ENCODE measurements at regions of chr2 and their contacts with region 1.

Region 1: DNA sequence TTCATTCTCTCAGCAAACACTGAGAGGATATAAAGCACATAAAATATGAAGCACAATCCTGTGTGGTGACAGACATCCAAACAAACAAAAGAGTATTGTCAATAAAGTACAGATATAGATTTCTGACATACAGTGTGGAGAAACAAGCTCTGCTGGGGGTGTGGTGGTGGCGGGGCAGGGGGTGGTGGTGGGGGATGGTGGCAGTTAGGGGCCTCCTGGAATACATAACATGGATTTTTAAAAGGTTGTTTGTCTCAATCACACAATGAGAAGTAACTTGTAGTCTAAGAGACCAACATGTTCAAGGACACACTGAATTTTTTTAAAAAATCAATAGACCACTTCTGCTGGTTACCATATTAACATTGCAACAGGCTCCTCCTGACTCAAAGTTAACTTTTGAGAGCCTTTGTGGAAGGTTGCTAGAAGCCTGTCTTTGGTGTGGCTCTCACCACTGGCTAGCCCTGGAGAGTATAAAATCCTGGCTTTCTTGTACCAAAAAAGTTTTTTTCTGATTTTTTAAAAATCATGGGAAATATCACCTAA is 1197.4 kb downstream of the SUCLG1 start:
- DNase-seq: no peak

Region 2: DNA sequence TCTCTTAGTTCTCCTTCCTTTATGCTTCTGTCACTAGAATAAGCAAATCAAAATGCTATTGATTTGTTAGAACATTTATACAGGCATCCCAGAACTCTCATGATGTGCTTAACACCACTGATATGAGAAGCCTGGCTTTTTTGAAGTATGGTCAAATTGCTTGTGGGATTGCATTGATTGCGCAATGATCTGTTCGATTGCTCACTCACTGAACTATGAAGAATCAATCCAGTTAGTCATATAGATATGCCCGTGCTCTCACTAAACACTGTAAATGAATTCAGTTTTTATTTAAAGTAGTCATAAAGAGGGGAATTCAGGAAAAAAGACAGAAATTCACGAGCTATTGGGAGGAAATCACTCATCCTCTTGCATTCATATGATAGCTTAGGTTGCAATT is 40.4 kb before region 1 on chr2:
- intact Hi-C with region 1: no loop called
- DNase-seq: no peak

Region 3: DNA sequence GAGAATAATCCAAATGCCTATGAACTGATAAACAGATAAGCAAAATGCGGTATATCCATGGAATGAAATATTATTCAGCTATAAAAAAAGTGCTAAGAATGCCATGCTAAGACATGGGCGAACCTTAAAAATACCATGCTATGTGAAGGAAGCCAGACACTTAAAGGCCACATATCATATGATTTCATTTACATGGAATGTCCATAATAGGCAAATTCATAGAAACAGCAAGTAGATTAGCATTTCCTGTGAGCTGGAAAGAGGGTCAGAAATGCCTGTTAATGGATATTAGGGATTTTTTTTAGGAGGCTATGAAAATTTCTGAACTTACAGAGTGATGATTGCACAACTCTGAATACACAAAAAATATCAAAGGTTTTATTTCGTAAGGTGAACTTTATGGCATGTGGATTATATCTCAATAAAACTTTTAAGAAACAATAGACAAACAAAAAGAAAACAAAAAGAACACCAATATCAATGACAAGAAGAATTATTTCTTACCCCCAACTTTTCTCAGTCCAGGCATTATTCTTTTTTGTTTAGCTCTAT is 10.3 kb before region 1 on chr2:
- intact Hi-C with region 1: loop called in 1 of 2 experiments (anchors 1 kb)
- DNase-seq: no peak

Measured in posterior vena cava (tissue), 2 donors.